ENCODE measurements at regions of chr12 and their contacts with region 1.

Region 1: GRCh38 chr12:109972821-109973220 is 23.3 kb downstream of the GIT2 start:
- DNase-seq: no peak
- ATAC-seq: no peak
- H3K4me3 Mint-ChIP-seq: no peak overlapping the region
- H3K27ac Mint-ChIP-seq: peak overlapping the region; percentile 82
- H3K4me1 Mint-ChIP-seq: peaks cover 26% of the 10 kb centered on the region
- H3K27me3 Mint-ChIP-seq: no peaks in the 10 kb centered on the region
- CTCF ChIP-seq: no peak

Region 2: GRCh38 chr12:110004598-110004997 is 31.8 kb after region 1 on chr12:
- CTCF ChIA-PET with region 1: no interaction called
- POLR2A ChIA-PET with region 1: interaction called, 4 read pairs
- intact Hi-C with region 1: loop called (anchors 5 kb)
- DNase-seq: no peak
- ATAC-seq: peak; percentile 74
- H3K4me3 Mint-ChIP-seq: peak overlapping the region; percentile 15
- H3K27ac Mint-ChIP-seq: peak overlapping the region; percentile 15
- H3K4me1 Mint-ChIP-seq: peaks cover 74% of the 10 kb centered on the region
- H3K27me3 Mint-ChIP-seq: no peaks in the 10 kb centered on the region
- CTCF ChIP-seq: no peak

Region 3: DNA sequence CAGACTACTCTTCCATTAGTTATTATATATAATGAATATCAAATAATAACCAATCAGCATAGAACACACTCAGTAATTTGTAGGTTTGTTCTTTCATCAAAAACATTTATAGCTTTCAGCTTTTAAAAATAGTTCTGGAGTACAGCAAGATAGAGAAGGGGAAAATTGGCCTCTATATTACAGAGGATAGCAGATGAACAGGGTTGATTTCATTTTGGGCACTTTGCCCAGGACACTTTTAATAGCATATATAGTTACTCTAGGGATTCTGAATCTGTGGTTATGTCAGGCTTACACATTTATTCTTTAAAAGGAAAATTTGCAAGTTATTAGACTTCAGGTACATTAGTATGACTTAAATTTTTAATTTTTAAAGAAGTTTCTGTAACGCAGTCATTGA is 203.9 kb after region 1 on chr12:
- CTCF ChIA-PET with region 1: no interaction called
- POLR2A ChIA-PET with region 1: no interaction called
- intact Hi-C with region 1: no loop called
- DNase-seq: no peak
- ATAC-seq: no peak
- H3K4me3 Mint-ChIP-seq: no peak overlapping the region
- H3K27ac Mint-ChIP-seq: no peak overlapping the region
- H3K4me1 Mint-ChIP-seq: no peaks in the 10 kb centered on the region
- H3K27me3 Mint-ChIP-seq: no peaks in the 10 kb centered on the region
- CTCF ChIP-seq: no peak